Activated CD8-positive, alpha-beta memory T cell treated with anti-CD3 and anti-CD28 coated beads, Interleukin-2, amount 10 ng/mL, durations not matched to agents 7 days and 5 days (primary cell): ENCODE measurements at regions of chr21 and their contacts with region 1.

Region 1: DNA sequence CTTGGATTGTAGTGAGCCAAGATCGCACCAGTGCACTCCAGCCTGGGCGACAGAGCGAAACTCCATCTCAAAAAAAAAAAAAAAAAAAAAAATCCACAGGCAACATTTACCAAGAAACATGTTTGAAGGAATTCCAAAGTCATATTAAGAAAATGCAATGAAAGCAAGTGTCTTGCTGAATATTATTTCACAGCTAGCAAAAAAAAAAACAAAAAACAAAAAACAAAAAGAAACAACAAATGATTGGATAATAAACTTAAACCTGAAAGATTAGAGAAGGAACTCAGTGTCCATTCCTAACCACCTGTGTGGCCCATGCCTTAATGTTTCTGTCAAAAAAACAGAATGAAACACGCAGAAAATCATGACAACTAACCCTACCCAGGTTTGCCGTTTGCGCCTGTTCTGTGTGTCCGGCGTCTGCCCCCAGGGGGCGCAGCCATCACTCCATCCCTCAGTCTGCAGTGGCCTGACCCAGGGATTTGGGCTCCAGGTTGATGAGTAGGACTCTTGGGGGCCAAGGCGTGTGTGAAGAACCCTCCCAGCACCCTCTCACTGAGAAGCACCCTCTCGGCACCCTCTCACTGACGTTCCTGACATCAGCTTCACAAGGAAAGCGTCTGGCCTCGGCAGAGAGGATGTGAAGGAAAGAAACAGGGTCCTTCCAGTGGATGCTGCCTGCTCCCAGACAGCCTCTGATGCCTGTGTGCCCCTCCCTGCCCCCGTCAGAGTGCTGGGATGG is 19.2 kb upstream of the PTTG1IP start:
- DNase-seq: peak; percentile 84
- ATAC-seq: peak; percentile 85
- H3K4me3 Mint-ChIP-seq: no peak overlapping the region
- H3K27ac Mint-ChIP-seq: no peak overlapping the region
- H3K4me1 Mint-ChIP-seq: peaks cover 9% of the 10 kb centered on the region
- H3K27me3 Mint-ChIP-seq: no peaks in the 10 kb centered on the region

Region 2: GRCh38 chr21:44814498-44815023 is 78.1 kb before region 1 on chr21:
- CTCF ChIA-PET with region 1: no interaction called
- DNase-seq: no peak
- ATAC-seq: no peak
- H3K4me3 Mint-ChIP-seq: no peak overlapping the region
- H3K27ac Mint-ChIP-seq: no peak overlapping the region
- H3K4me1 Mint-ChIP-seq: peaks cover 22% of the 10 kb centered on the region
- H3K27me3 Mint-ChIP-seq: no peaks in the 10 kb centered on the region

Region 3: GRCh38 chr21:44846485-44847275 is 46.0 kb before region 1 on chr21:
- CTCF ChIA-PET with region 1: no interaction called
- DNase-seq: peak; percentile 52
- ATAC-seq: no peak
- H3K4me3 Mint-ChIP-seq: peak overlapping the region; percentile 36
- H3K27ac Mint-ChIP-seq: peak overlapping the region; percentile 5
- H3K4me1 Mint-ChIP-seq: peaks cover 8% of the 10 kb centered on the region
- H3K27me3 Mint-ChIP-seq: peaks cover 6% of the 10 kb centered on the region

Region 4: DNA sequence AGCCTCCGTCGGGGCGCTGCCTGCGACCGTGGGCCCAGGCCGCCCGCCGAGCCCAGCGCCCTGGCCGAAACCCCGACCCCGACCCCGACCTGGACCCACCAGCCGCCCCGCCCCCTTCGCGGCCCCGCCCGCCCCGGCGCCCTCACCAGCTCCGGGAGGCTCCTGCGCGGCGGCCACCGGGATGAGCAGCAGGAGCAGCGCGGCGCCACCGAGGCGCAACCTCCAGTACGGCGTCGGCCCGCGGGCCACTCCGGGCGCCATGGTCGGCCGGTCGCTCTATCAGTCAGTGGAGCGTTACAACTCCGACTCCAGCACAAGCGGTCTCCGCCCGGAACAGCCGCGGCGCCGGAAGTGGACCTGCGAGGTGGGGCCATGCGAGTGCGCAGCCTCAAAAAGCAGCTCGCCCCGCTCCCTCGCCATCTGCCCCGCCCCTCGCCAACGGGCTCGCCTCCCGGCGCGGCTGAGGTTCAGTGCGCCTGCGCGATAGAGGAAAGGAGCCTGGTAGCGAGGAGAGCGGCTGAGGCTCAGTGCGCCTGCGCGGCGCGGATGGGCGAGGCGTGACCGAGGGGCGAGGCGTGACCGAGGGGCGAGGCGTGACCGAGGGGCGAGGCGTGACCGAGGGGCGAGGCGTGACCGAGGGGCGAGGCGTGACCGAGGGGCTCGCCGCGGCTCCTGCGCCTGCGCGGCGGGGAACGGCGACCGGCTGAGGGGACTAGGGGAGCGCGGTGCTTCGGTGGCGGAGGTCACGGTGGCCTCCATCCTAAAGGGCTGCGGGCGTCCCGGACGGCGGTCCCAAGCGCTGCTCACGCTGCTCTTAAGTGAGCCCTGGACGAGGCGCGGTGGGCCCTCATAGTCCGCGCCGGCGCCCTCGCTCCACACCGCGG is 19.1 kb before region 1 on chr21 and contains the start of gene PTTG1IP:
- CTCF ChIA-PET with region 1: interaction called, 16 read pairs
- DNase-seq: peak; percentile 99
- ATAC-seq: peak; percentile 86
- H3K4me3 Mint-ChIP-seq: peak within 1 kb of the TSS; percentile 86
- H3K27ac Mint-ChIP-seq: peak within 1 kb of the TSS; percentile 90
- H3K4me1 Mint-ChIP-seq: peaks cover 41% of the 10 kb centered on the region
- H3K27me3 Mint-ChIP-seq: no peaks in the 10 kb centered on the region
- total RNA-seq, gene PTTG1IP: 46.0 to 49.9 TPM

Region 5: DNA sequence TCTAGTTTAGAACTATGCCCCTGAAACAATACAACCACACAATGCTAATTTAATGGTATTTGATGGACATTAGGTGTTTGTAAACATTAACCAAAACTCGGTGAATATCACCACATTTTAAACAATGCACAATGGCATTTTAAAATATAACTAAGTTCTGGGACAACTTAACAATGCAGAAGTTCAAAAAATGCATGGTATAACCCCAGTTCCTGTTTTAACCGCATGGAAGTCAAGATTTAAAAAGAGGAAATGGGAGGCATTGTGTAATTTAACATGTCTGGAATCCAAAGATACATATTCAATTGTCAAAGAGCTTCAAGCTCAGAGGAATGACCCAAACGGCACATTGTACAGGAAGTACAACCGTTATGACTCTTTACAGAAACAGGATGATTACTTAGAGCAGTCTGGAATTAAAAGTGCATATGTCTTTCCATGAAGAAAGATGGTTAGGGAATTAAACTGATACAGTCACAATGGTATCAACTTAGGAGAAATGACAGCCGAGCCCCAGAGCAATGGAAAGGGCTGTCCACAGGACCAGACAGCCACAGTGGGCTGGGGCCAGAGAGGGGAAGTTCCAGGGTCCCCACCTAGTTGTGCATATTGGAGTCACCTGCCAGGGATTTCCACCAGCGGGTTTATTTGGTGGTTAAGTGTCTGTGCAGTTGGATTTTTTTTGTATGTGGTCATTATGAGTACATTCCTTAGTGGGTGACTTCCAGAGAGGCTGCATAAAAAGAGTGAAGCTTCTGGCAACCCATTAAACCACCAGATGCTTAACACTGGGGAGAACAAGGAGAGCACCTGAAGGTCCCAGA is 11.7 kb before region 1 on chr21:
- CTCF ChIA-PET with region 1: interaction called, 33 read pairs
- DNase-seq: no peak
- ATAC-seq: peak; percentile 32
- H3K4me3 Mint-ChIP-seq: no peak overlapping the region
- H3K27ac Mint-ChIP-seq: no peak overlapping the region
- H3K4me1 Mint-ChIP-seq: peaks cover 15% of the 10 kb centered on the region
- H3K27me3 Mint-ChIP-seq: no peaks in the 10 kb centered on the region

Region 6: GRCh38 chr21:44911389-44912157 is 18.9 kb after region 1 on chr21:
- CTCF ChIA-PET with region 1: interaction called, 69 read pairs
- DNase-seq: peak; percentile 79
- ATAC-seq: peak; percentile 60
- H3K4me3 Mint-ChIP-seq: peak overlapping the region; percentile 42
- H3K27ac Mint-ChIP-seq: peak overlapping the region; percentile 83
- H3K4me1 Mint-ChIP-seq: peaks cover 55% of the 10 kb centered on the region
- H3K27me3 Mint-ChIP-seq: no peaks in the 10 kb centered on the region

Region 7: GRCh38 chr21:44920694-44921604 is 28.2 kb after region 1 on chr21 and contains the start of gene ITGB2:
- CTCF ChIA-PET with region 1: interaction called, 39 read pairs
- DNase-seq: peak; percentile 88
- ATAC-seq: peak; percentile 77
- H3K4me3 Mint-ChIP-seq: peak within 1 kb of the TSS; percentile 91
- H3K27ac Mint-ChIP-seq: peak within 1 kb of the TSS; percentile 85
- H3K4me1 Mint-ChIP-seq: peaks cover 64% of the 10 kb centered on the region
- H3K27me3 Mint-ChIP-seq: no peaks in the 10 kb centered on the region
- total RNA-seq, gene ITGB2: 336 to 372 TPM

Region 8: DNA sequence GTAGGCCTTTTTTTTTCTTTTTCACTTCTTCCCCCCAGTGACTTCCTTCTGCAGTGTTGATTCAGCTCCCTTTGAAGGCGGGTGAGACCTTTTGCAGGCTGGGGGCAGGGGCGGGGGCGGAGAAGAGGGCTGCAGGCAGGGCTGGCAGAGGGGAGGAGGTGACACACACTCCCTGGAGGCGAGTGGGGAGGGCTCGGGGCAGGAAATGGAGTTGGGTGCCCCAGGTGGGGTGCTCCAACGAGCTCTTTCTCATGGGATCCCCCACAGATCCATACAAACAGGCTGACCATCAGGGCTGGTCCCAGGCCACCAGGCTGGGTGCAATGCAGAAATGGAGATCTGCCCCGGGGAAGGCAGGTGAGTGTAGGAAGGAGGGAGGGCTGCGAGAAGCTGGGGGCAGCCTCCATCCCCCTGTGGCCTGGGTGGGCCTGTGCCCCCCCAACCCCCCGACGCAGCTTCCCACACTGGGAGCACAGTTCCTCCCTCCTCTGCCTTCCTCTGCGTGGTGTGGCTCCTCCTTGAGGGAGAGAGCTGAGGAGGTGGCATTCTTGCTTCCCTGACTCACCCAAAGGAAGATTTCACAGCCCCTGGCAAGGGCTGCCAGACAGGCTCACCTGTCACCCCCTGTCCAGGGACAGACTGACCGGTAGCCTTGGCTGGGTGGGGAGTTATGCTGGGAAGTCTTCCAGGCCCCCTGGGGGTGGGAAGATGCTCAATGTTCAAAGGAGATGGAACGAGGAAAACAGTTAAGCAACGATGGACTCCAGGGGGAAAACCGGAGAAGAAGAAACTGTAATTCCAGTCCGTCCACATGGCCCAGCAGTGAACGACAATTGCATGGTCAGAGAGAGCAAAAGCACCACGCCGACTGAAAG is 35.1 kb after region 1 on chr21:
- CTCF ChIA-PET with region 1: interaction called, 128 read pairs
- DNase-seq: peak; percentile 91
- ATAC-seq: peak; percentile 60
- H3K4me3 Mint-ChIP-seq: peak overlapping the region; percentile 72
- H3K27ac Mint-ChIP-seq: peak overlapping the region; percentile 93
- H3K4me1 Mint-ChIP-seq: peaks cover 78% of the 10 kb centered on the region
- H3K27me3 Mint-ChIP-seq: no peaks in the 10 kb centered on the region